Activated CD4-positive, alpha-beta memory T cell treated with anti-CD3 and anti-CD28 coated beads for 36 hours (primary cell): ENCODE measurements at regions of chr6 and their contacts with region 1.

Region 1: GRCh38 chr6:160930547-160931377 is 60.8 kb upstream of the MAP3K4 start:
- DNase-seq: peak; percentile 67
- H3K4me3 Mint-ChIP-seq: peak overlapping the region; percentile 44
- H3K27ac Mint-ChIP-seq: no peak overlapping the region
- H3K4me1 Mint-ChIP-seq: peaks cover 6% of the 10 kb centered on the region
- H3K27me3 Mint-ChIP-seq: peaks cover 37% of the 10 kb centered on the region

Region 2: GRCh38 chr6:160919723-160920440 is 10.9 kb before region 1 on chr6:
- CTCF ChIA-PET with region 1: interaction called, 12 read pairs
- POLR2A ChIA-PET with region 1: no interaction called
- intact Hi-C with region 1: no loop called
- DNase-seq: no peak
- H3K4me3 Mint-ChIP-seq: no peak overlapping the region
- H3K27ac Mint-ChIP-seq: no peak overlapping the region
- H3K4me1 Mint-ChIP-seq: no peaks in the 10 kb centered on the region
- H3K27me3 Mint-ChIP-seq: peaks cover 5% of the 10 kb centered on the region

Region 3: DNA sequence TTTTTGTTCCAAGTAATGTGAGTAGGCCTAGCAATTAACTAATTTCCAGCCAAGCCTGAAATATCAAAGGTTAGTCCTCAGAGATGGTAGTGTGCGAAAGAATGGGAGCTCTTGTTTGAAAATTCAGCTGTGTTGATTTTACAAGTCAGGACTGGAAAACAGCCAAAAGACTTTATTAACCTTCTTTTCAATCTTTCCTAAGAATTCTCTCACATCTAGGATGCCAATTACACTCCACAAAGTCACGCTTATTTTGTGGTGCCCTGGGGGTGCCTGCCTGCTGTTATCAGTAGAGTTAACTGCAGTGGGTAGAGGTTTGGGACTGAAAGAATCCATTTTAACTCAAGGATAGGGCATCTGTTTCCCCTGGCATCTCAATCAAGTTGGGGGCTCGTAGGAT is 30.1 kb after region 1 on chr6:
- CTCF ChIA-PET with region 1: interaction called, 15 read pairs
- POLR2A ChIA-PET with region 1: no interaction called
- intact Hi-C with region 1: no loop called
- DNase-seq: no peak
- H3K4me3 Mint-ChIP-seq: no peak overlapping the region
- H3K27ac Mint-ChIP-seq: no peak overlapping the region
- H3K4me1 Mint-ChIP-seq: no peaks in the 10 kb centered on the region
- H3K27me3 Mint-ChIP-seq: peaks cover 9% of the 10 kb centered on the region

Region 4: GRCh38 chr6:161023316-161023715 is 92.6 kb after region 1 on chr6:
- CTCF ChIA-PET with region 1: no interaction called
- POLR2A ChIA-PET with region 1: no interaction called
- intact Hi-C with region 1: no loop called
- DNase-seq: no peak
- H3K4me3 Mint-ChIP-seq: no peak overlapping the region
- H3K27ac Mint-ChIP-seq: no peak overlapping the region
- H3K4me1 Mint-ChIP-seq: peaks cover 25% of the 10 kb centered on the region
- H3K27me3 Mint-ChIP-seq: no peaks in the 10 kb centered on the region

Region 5: DNA sequence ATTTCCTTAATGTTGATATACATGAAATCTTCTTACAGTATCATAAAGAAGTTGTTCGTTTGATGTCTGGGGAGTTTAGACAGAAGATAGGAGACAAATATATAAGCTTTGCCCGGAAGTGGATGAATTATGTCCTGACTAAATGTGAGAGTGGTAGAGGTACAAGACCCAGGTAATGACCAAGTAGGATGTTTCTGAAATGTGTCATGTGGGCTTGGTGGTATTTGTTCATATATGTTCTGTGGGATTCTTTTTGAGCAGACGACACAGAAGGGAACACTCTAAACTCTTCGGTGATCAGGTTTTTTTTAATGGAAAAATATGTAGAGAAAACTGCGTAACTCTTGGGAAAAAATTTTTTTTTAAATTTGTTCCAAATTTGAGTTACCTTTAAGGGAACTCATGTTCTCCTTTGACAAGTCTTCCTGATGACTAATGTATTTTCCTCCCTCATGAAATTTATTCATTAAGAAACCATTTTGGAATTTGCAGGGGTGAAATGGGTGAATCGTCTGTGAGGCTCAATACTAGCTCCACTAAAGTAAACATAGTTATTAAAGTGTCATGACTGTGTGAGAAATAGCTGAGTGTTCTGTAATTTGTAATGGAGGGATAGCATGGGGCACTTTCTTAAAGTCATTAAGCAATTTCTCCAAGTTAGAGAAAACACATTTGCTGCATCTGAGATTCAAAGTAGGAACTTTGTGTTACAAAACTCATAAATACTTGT is 161.4 kb after region 1 on chr6:
- CTCF ChIA-PET with region 1: interaction called, 4 read pairs
- POLR2A ChIA-PET with region 1: no interaction called
- intact Hi-C with region 1: loop called (anchors 10 kb)
- DNase-seq: no peak
- H3K4me3 Mint-ChIP-seq: no peak overlapping the region
- H3K27ac Mint-ChIP-seq: no peak overlapping the region
- H3K4me1 Mint-ChIP-seq: peaks cover 7% of the 10 kb centered on the region
- H3K27me3 Mint-ChIP-seq: no peaks in the 10 kb centered on the region